ENCODE measurements at regions of chr20 and their contacts with region 1.

Region 1: GRCh38 chr20:53652090-53652858 is 58.6 kb upstream of the ZNF217 start:
- DNase-seq: no peak
- ATAC-seq: peak in 6 of 8 donors; percentile 33 to 84 (median 58)
- H3K4me3 ChIP-seq: peak overlapping the region in 7 of 10 donors; percentile 1 to 30 (median 20)
- H3K27ac ChIP-seq: peak overlapping the region in 7 of 10 donors; percentile 7 to 84 (median 58)
- H3K4me1 ChIP-seq: peaks cover 0 to 53% (median 27%) of the 10 kb centered on the region in 9 donors
- H3K27me3 ChIP-seq: no peaks in the 10 kb centered on the region
- CTCF ChIP-seq: no peak

Region 2: DNA sequence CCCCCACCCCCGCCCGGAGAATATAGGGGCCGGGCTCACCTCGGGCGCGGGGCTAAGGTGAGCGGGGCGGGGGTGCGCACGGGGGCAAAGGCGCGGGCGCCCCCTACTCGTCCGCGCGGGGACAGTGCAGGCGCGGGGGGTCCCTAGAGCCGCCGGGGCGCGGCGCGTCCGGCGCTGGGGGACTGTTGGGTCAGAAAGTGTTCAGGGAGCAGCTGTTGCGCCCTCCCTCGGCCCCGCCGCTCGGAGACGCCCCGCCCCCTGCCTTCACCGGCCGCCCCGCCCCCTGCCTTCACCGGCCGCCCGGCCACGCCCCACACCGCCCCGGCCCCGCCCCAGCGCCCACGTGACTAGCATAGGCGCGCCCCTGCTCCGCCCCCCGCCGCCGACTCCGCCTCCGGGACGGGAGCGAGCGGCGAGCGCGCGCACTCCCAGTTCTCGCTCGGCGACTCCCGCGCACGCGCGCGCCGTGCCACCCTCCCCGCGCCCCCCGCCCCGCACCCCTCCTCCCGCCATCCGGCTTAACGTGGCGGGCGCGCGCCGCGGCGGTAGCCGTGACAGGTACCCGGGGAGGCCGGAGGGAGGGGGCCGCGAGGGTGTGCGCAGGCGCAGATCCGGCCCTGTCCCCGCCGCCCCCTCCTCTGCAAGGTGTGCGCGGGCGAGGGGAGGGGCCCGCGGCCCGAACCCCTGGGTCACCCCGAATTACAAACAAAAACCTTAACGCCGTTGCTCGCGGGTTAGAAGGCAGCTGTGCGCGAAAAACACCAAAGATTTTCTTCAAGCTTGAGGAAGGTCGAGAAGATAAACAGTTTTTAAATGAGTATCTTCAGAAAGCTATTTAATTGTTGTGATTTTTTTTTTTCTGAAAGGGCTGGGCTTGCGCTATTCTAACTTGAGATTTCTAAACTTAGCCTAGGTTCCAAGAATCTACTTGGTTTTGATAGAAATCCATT is 57.9 kb before region 1 on chr20:
- intact Hi-C with region 1: loop called in 1 of 10 experiments (anchors 2 kb)
- DNase-seq: peak; percentile 96 to 99
- ATAC-seq: peak; percentile 84 to 98 (median 92)
- H3K4me3 ChIP-seq: peak overlapping the region; percentile 76 to 98 (median 94)
- H3K27ac ChIP-seq: peak overlapping the region; percentile 97 to 100 (median 99)
- H3K4me1 ChIP-seq: peaks cover 0 to 64% (median 31%) of the 10 kb centered on the region in 9 donors
- H3K27me3 ChIP-seq: no peaks in the 10 kb centered on the region
- CTCF ChIP-seq: peak in 8 of 9 donors; percentile 14 to 57 (median 40)

Region 3: GRCh38 chr20:53623454-53624211 is 28.6 kb before region 1 on chr20:
- intact Hi-C with region 1: loop called in 1 of 10 experiments (anchors 5 kb)
- DNase-seq: peak; percentile 40 to 73
- ATAC-seq: peak; percentile 88 to 94 (median 92)
- H3K4me3 ChIP-seq: peak overlapping the region in 9 of 10 donors; percentile 14 to 54 (median 47)
- H3K27ac ChIP-seq: peak overlapping the region; percentile 32 to 97 (median 85)
- H3K4me1 ChIP-seq: peaks cover 0 to 54% (median 36%) of the 10 kb centered on the region in 9 donors
- H3K27me3 ChIP-seq: no peaks in the 10 kb centered on the region
- CTCF ChIP-seq: peak in 2 of 9 donors; percentile 16 to 39

Region 4: GRCh38 chr20:53677447-53678314 is 25.4 kb after region 1 on chr20:
- intact Hi-C with region 1: loop called in 1 of 10 experiments (anchors 2 kb)
- DNase-seq: peak in 1 of 2 donors; percentile 38
- ATAC-seq: peak in 7 of 8 donors; percentile 34 to 73 (median 70)
- H3K4me3 ChIP-seq: no peak overlapping the region
- H3K27ac ChIP-seq: peak overlapping the region in 9 of 10 donors; percentile 2 to 76 (median 63)
- H3K4me1 ChIP-seq: peaks cover 0 to 39% (median 25%) of the 10 kb centered on the region in 9 donors
- H3K27me3 ChIP-seq: no peaks in the 10 kb centered on the region
- CTCF ChIP-seq: no peak

Measured in heart right ventricle (tissue), 16 donors.